H1 (cell line): ENCODE measurements at regions of chr22 and their contacts with region 1.

Region 1: GRCh38 chr22:46317646-46318045 is 17.9 kb upstream of the TRMU start:
- DNase-seq: no peak
- H3K4me3 ChIP-seq: no peak overlapping the region
- H3K27ac ChIP-seq: no peak overlapping the region
- H3K4me1 ChIP-seq: no peaks in the 10 kb centered on the region
- H3K27me3 ChIP-seq: no peaks in the 10 kb centered on the region
- CTCF ChIP-seq: no peak
- EP300 ChIP-seq: no peak
- POLR2A ChIP-seq: no peak
- RAD21 ChIP-seq: no peak

Region 2: GRCh38 chr22:46122511-46122971 is 195.1 kb before region 1 on chr22:
- CTCF ChIA-PET with region 1: interaction called, 30 read pairs
- POLR2A ChIA-PET with region 1: no interaction called
- DNase-seq: peak in 1 of 2 experiments; percentile 90
- H3K4me3 ChIP-seq: no peak overlapping the region
- H3K27ac ChIP-seq: no peak overlapping the region
- H3K4me1 ChIP-seq: peaks cover 0 to 3% (median 0%) of the 10 kb centered on the region in 4 experiments; a peak in 3 of 7 replicates
- H3K27me3 ChIP-seq: peaks cover 0 to 6% (median 0%) of the 10 kb centered on the region in 4 experiments; a peak in 2 of 7 replicates
- CTCF ChIP-seq: peak; percentile 84 to 93 (median 86)
- EP300 ChIP-seq: no peak
- POLR2A ChIP-seq: no peak
- RAD21 ChIP-seq: peak; percentile 81 to 82

Region 3: DNA sequence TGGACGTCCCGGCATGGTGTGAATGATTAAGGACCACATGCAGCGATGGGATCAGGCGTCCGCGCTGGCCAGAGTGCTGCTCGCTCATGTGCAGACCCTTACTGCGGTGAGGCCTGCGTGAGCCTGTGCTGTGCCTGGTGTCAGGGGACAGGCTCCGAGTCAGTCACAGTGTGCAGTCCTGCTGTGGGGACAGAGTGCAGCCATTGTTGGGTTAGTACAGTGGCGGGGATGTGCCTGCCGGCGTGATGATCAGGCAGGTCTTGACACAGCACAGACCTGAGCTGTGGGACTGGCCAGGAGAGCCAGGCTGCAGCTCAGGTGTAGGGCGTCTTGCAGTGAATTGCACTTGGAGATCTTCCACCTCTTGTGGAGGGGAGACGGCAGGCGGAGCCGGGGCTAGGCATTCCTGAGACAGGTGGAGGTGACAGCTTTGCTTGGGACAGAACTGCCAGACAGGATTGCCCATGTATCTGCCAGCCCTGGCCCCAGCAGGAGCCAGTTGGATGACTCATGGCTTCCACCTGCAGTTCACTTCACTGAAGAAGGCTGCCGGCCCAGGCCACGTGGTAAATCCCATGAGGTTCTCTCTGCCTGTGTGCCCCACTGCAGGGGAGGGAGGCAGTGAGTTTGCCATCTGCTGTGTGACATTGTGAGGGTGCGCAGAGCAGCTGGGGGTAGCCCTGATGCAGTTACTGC is 35.2 kb after region 1 on chr22:
- CTCF ChIA-PET with region 1: no interaction called
- POLR2A ChIA-PET with region 1: no interaction called
- DNase-seq: no peak
- H3K4me3 ChIP-seq: no peak overlapping the region
- H3K27ac ChIP-seq: no peak overlapping the region
- H3K4me1 ChIP-seq: no peaks in the 10 kb centered on the region
- H3K27me3 ChIP-seq: no peaks in the 10 kb centered on the region
- CTCF ChIP-seq: no peak
- EP300 ChIP-seq: no peak
- POLR2A ChIP-seq: no peak
- RAD21 ChIP-seq: no peak

Region 4: GRCh38 chr22:46432164-46433068 is 114.8 kb after region 1 on chr22:
- CTCF ChIA-PET with region 1: no interaction called
- POLR2A ChIA-PET with region 1: no interaction called
- DNase-seq: peak in 1 of 2 experiments; percentile 43
- H3K4me3 ChIP-seq: no peak overlapping the region
- H3K27ac ChIP-seq: no peak overlapping the region; the same call in 1 of the 2 replicates
- H3K4me1 ChIP-seq: no peaks in the 10 kb centered on the region
- H3K27me3 ChIP-seq: no peaks in the 10 kb centered on the region
- CTCF ChIP-seq: no peak
- EP300 ChIP-seq: no peak
- POLR2A ChIP-seq: no peak
- RAD21 ChIP-seq: no peak

Region 5: GRCh38 chr22:46815896-46816731 is 498.5 kb after region 1 on chr22:
- CTCF ChIA-PET with region 1: no interaction called
- POLR2A ChIA-PET with region 1: no interaction called
- DNase-seq: peak in 1 of 2 experiments; percentile 45
- H3K4me3 ChIP-seq: no peak overlapping the region
- H3K27ac ChIP-seq: 0 out of 2 replicates have a peak overlapping the region, but pooled peaks have one; percentile 12
- H3K4me1 ChIP-seq: peaks cover 0 to 2% (median under 1%) of the 10 kb centered on the region in 4 experiments; a peak in 1 of 7 replicates
- H3K27me3 ChIP-seq: no peaks in the 10 kb centered on the region
- CTCF ChIP-seq: no peak
- EP300 ChIP-seq: no peak
- POLR2A ChIP-seq: no peak
- RAD21 ChIP-seq: no peak